B cell (primary cell): ENCODE measurements at regions of chr7 and their contacts with region 1.

Region 1: GRCh38 chr7:128862571-128863432 is at the start of gene ATP6V1F:
- DNase-seq: peak; percentile 99
- ATAC-seq: peak; percentile 90
- H3K4me3 ChIP-seq: peak within 1 kb of the TSS; percentile 77 to 99 (median 97)
- H3K4me3 Mint-ChIP-seq: peak within 1 kb of the TSS; percentile 97
- H3K27ac ChIP-seq: peak within 1 kb of the TSS; percentile 95
- H3K27ac Mint-ChIP-seq: peak within 1 kb of the TSS; percentile 97
- H3K4me1 ChIP-seq: peaks cover 11 to 21% of the 10 kb centered on the region in 2 donors
- H3K4me1 Mint-ChIP-seq: peaks cover 44% of the 10 kb centered on the region
- H3K27me3 ChIP-seq: no peaks in the 10 kb centered on the region
- H3K27me3 Mint-ChIP-seq: no peaks in the 10 kb centered on the region
- CTCF ChIP-seq: no peak
- total RNA-seq, gene ATP6V1F: 77.9 and 81.7 TPM in 2 replicates

Region 2: DNA sequence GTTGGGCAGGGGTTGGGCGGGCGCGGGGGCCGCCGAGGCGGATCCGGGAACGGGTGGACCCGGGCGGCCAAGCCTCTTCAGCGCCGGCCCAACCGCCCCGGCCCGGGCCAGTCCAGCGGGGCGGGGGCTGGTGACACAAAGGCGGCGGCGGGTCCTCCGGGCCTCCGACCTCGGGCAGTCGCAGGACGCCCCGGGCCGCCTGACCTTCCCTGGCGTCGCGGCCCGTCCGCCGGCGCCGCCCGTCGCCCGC is 332.0 kb before region 1 on chr7:
- CTCF ChIA-PET with region 1: no interaction called
- POLR2A ChIA-PET with region 1: no interaction called
- intact Hi-C with region 1: loop called (anchors 2 kb)
- DNase-seq: no peak
- ATAC-seq: no peak
- H3K4me3 ChIP-seq: peak overlapping the region in 4 of 5 experiments; percentile 42 to 72 (median 68)
- H3K4me3 Mint-ChIP-seq: no peak overlapping the region
- H3K27ac ChIP-seq: peak overlapping the region; percentile 55 to 87
- H3K27ac Mint-ChIP-seq: no peak overlapping the region
- H3K4me1 ChIP-seq: peaks cover 13 to 18% of the 10 kb centered on the region in 2 donors
- H3K4me1 Mint-ChIP-seq: peaks cover 32% of the 10 kb centered on the region
- H3K27me3 ChIP-seq: no peaks in the 10 kb centered on the region
- H3K27me3 Mint-ChIP-seq: no peaks in the 10 kb centered on the region
- CTCF ChIP-seq: no peak

Region 3: DNA sequence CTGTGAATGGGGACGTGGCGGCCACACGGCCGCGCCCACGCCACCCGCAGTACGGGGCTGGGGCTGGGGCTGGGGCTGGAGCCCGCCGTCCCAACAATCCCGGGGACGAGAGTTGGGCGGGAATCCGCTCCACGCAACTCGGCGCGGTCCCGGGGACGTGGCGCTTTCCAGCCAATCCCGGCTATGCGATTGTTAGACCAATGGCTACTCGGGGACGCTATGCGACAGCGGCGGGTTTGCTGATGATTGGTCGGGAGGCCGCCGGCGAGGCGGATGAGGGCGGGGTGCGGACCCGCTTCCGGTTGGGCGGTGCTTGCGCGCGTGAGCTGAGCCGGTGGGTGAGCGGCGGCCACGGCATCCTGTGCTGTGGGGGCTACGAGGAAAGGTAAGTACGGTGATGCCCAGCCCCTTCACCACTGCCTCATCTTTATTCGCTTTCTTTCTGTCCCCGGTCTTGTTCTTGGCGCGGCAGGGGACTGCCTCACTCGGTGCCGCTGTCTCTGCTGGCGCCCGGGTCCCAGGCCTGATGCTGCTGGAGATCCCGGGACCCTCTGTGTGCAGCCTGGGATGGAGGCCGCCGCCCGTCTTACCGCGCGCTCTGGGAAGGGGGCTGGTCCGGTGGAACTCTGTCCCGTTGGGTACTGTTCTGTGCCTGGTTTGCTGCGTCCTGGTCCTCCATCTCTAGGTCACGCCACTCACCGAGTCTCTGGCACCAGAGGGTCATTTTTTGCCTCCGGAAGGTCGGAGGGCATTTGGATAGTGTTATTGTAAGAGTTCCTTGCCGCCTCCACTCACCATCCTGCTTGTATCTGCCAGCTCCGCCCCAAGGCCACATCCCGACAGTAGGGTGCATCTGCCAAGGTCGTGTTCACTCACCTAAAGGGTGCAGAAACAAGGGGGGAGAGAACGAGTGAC is 123.5 kb before region 1 on chr7 and contains the start of gene CALU:
- CTCF ChIA-PET with region 1: interaction called, 3 read pairs
- POLR2A ChIA-PET with region 1: interaction called, 3 read pairs
- intact Hi-C with region 1: loop called (anchors 2 kb)
- DNase-seq: peak; percentile 93
- ATAC-seq: peak; percentile 96
- H3K4me3 ChIP-seq: peak within 1 kb of the TSS; percentile 58 to 96 (median 88)
- H3K4me3 Mint-ChIP-seq: peak within 1 kb of the TSS; percentile 100
- H3K27ac ChIP-seq: peak within 1 kb of the TSS; percentile 67 to 83
- H3K27ac Mint-ChIP-seq: peak within 1 kb of the TSS; percentile 93
- H3K4me1 ChIP-seq: peaks cover 34 to 48% of the 10 kb centered on the region in 2 donors
- H3K4me1 Mint-ChIP-seq: peaks cover 41% of the 10 kb centered on the region
- H3K27me3 ChIP-seq: no peaks in the 10 kb centered on the region
- H3K27me3 Mint-ChIP-seq: no peaks in the 10 kb centered on the region
- CTCF ChIP-seq: no peak
- total RNA-seq, gene CALU: 11.2 and 12.4 TPM in 2 replicates

Region 4: GRCh38 chr7:128791121-128791961 is 71.5 kb before region 1 on chr7:
- CTCF ChIA-PET with region 1: no interaction called
- POLR2A ChIA-PET with region 1: interaction called, 4 read pairs
- intact Hi-C with region 1: loop called (anchors 2 kb)
- DNase-seq: peak; percentile 83
- ATAC-seq: peak; percentile 89
- H3K4me3 ChIP-seq: peak overlapping the region; percentile 38 to 87 (median 71)
- H3K4me3 Mint-ChIP-seq: peak overlapping the region; percentile 84
- H3K27ac ChIP-seq: no peak overlapping the region
- H3K27ac Mint-ChIP-seq: no peak overlapping the region
- H3K4me1 ChIP-seq: peaks cover 9 to 15% of the 10 kb centered on the region in 2 donors
- H3K4me1 Mint-ChIP-seq: peaks cover 9% of the 10 kb centered on the region
- H3K27me3 ChIP-seq: no peaks in the 10 kb centered on the region
- H3K27me3 Mint-ChIP-seq: no peaks in the 10 kb centered on the region
- CTCF ChIP-seq: no peak

Region 5: GRCh38 chr7:128841921-128842651 is 20.7 kb before region 1 on chr7:
- CTCF ChIA-PET with region 1: interaction called, 7 read pairs
- POLR2A ChIA-PET with region 1: interaction called, 10 read pairs
- intact Hi-C with region 1: no loop called
- DNase-seq: peak; percentile 74
- ATAC-seq: peak; percentile 61
- H3K4me3 ChIP-seq: no peak overlapping the region
- H3K4me3 Mint-ChIP-seq: no peak overlapping the region
- H3K27ac ChIP-seq: no peak overlapping the region
- H3K27ac Mint-ChIP-seq: no peak overlapping the region
- H3K4me1 ChIP-seq: peaks cover 0 to 11% of the 10 kb centered on the region in 2 donors
- H3K4me1 Mint-ChIP-seq: peaks cover 4% of the 10 kb centered on the region
- H3K27me3 ChIP-seq: no peaks in the 10 kb centered on the region
- H3K27me3 Mint-ChIP-seq: no peaks in the 10 kb centered on the region
- CTCF ChIP-seq: peak; percentile 81

Region 6: DNA sequence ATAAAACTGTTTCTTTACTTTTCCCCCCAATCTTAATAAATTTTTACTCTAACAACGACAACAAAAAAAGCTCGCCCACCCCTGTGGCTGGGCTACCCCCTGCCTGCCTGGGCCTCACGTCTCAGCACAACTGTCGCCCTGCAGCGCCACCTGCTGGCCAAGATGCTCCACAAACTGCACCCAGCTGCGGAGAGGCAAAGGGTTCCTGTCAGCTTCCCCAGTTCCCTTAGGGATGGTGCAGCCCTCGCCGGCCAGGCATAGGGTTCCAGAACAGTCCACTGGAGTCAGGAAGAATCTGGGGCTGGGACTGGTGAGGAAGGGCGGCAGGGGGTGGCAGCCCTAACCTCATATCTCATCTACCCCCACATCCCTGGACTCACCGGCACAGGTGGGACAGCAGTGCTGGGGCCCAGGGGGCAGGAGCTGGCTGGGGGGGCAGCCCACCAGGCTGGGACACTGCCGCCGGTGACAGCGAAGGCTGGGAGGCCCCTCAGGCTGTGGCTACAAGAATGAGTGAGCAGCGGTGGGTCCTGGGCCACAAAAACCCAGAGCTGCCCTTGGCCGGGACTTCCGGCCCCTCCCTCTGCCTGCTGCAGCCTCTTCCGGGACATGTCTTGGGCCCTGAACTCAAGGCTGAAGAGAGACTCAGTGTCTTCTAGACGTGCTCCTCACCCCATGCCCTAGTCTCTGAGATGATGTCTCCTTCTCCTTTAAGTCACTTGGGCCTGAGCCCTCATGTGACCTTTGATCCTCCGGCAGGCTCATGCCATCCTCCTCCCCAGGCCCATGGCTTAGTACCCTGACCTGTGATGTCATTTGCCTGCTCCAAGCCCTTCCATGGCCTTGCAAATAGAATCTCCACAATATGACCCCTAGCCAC is 21.1 kb after region 1 on chr7:
- CTCF ChIA-PET with region 1: interaction called, 17 read pairs
- POLR2A ChIA-PET with region 1: interaction called, 6 read pairs
- intact Hi-C with region 1: no loop called
- DNase-seq: peak; percentile 87
- ATAC-seq: peak; percentile 88
- H3K4me3 ChIP-seq: peak overlapping the region in 4 of 5 experiments; percentile 33 to 59 (median 40)
- H3K4me3 Mint-ChIP-seq: peak overlapping the region; percentile 44
- H3K27ac ChIP-seq: no peak overlapping the region
- H3K27ac Mint-ChIP-seq: peak overlapping the region; percentile 53
- H3K4me1 ChIP-seq: peaks cover 0 to 6% of the 10 kb centered on the region in 2 donors
- H3K4me1 Mint-ChIP-seq: peaks cover 3% of the 10 kb centered on the region
- H3K27me3 ChIP-seq: peaks cover 0 to 18% (median 3%) of the 10 kb centered on the region in 4 experiments
- H3K27me3 Mint-ChIP-seq: peaks cover 4% of the 10 kb centered on the region
- CTCF ChIP-seq: peak; percentile 97

Region 7: GRCh38 chr7:128940494-128941322 is 77.9 kb after region 1 on chr7:
- CTCF ChIA-PET with region 1: no interaction called
- POLR2A ChIA-PET with region 1: no interaction called
- intact Hi-C with region 1: no loop called
- DNase-seq: peak; percentile 91
- ATAC-seq: peak; percentile 72
- H3K4me3 ChIP-seq: peak overlapping the region; percentile 40 to 90 (median 84)
- H3K4me3 Mint-ChIP-seq: peak overlapping the region; percentile 94
- H3K27ac ChIP-seq: peak overlapping the region; percentile 89 to 99
- H3K27ac Mint-ChIP-seq: peak overlapping the region; percentile 97
- H3K4me1 ChIP-seq: peaks cover 31 to 44% of the 10 kb centered on the region in 2 donors
- H3K4me1 Mint-ChIP-seq: peaks cover 56% of the 10 kb centered on the region
- H3K27me3 ChIP-seq: no peaks in the 10 kb centered on the region
- H3K27me3 Mint-ChIP-seq: no peaks in the 10 kb centered on the region
- CTCF ChIP-seq: no peak

Region 8: DNA sequence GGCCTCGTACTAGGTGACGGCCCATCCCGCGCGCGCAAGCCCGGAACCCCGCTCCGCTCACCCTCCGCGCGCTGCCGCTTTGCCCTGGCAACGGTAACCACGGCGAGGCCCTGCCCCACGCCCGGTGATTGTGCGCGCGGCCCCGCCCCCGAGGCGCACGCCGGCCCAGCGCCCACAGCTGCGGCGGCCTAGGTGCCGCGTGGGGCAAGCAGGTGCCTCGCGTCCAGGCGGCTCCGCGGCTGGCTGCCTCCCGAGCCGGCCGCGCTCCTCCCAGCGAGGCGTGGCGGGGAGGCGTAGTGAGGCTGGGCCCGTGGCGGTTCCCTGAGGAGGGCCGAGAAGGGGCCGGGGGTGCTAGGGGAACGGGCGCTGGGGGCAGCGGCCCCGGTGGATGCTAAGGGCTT is 639.6 kb after region 1 on chr7 and contains the start of gene SMKR1:
- CTCF ChIA-PET with region 1: no interaction called
- POLR2A ChIA-PET with region 1: no interaction called
- intact Hi-C with region 1: loop called (anchors 2 kb)
- DNase-seq: peak; percentile 98
- ATAC-seq: peak; percentile 89
- H3K4me3 ChIP-seq: peak within 1 kb of the TSS; percentile 54 to 77 (median 66)
- H3K4me3 Mint-ChIP-seq: peak within 1 kb of the TSS; percentile 90
- H3K27ac ChIP-seq: peak within 1 kb of the TSS; percentile 72
- H3K27ac Mint-ChIP-seq: peak within 1 kb of the TSS; percentile 89
- H3K4me1 ChIP-seq: peaks cover 14 to 32% of the 10 kb centered on the region in 2 donors
- H3K4me1 Mint-ChIP-seq: peaks cover 22% of the 10 kb centered on the region
- H3K27me3 ChIP-seq: no peaks in the 10 kb centered on the region
- H3K27me3 Mint-ChIP-seq: no peaks in the 10 kb centered on the region
- CTCF ChIP-seq: no peak
- total RNA-seq, gene SMKR1: 2.9 and 3.8 TPM in 2 replicates